ENCODE measurements at regions of chr2 and their contacts with region 1.

Region 1: GRCh38 chr2:161954103-161954502 is 119.9 kb downstream of the DPP4 start:
- DNase-seq: no peak
- H3K4me3 Mint-ChIP-seq: peak overlapping the region; percentile 19
- H3K27ac Mint-ChIP-seq: peak overlapping the region; percentile 93
- H3K4me1 Mint-ChIP-seq: peaks cover 80% of the 10 kb centered on the region
- H3K27me3 Mint-ChIP-seq: no peaks in the 10 kb centered on the region

Region 2: GRCh38 chr2:161166538-161167409 is 787.3 kb before region 1 on chr2:
- intact Hi-C with region 1: loop called (anchors 1 kb)
- DNase-seq: peak; percentile 74
- H3K4me3 Mint-ChIP-seq: peak overlapping the region; percentile 75
- H3K27ac Mint-ChIP-seq: peak overlapping the region; percentile 94
- H3K4me1 Mint-ChIP-seq: peaks cover 100% of the 10 kb centered on the region
- H3K27me3 Mint-ChIP-seq: no peaks in the 10 kb centered on the region

Region 3: GRCh38 chr2:161965994-161966393 is 11.9 kb after region 1 on chr2:
- intact Hi-C with region 1: loop called (anchors 1 kb)
- DNase-seq: no peak
- H3K4me3 Mint-ChIP-seq: no peak overlapping the region
- H3K27ac Mint-ChIP-seq: peak overlapping the region; percentile 1
- H3K4me1 Mint-ChIP-seq: peaks cover 86% of the 10 kb centered on the region
- H3K27me3 Mint-ChIP-seq: no peaks in the 10 kb centered on the region

Region 4: GRCh38 chr2:161992526-161992925 is 38.4 kb after region 1 on chr2:
- intact Hi-C with region 1: loop called (anchors 1 kb)
- DNase-seq: peak; percentile 61
- H3K4me3 Mint-ChIP-seq: peak overlapping the region; percentile 83
- H3K27ac Mint-ChIP-seq: peak overlapping the region; percentile 96
- H3K4me1 Mint-ChIP-seq: peaks cover 78% of the 10 kb centered on the region
- H3K27me3 Mint-ChIP-seq: no peaks in the 10 kb centered on the region

Region 5: GRCh38 chr2:162058973-162059668 is 105.0 kb after region 1 on chr2:
- intact Hi-C with region 1: loop called (anchors 1 kb)
- DNase-seq: peak; percentile 25
- H3K4me3 Mint-ChIP-seq: peak overlapping the region; percentile 75
- H3K27ac Mint-ChIP-seq: peak overlapping the region; percentile 96
- H3K4me1 Mint-ChIP-seq: peaks cover 93% of the 10 kb centered on the region
- H3K27me3 Mint-ChIP-seq: no peaks in the 10 kb centered on the region

Region 6: DNA sequence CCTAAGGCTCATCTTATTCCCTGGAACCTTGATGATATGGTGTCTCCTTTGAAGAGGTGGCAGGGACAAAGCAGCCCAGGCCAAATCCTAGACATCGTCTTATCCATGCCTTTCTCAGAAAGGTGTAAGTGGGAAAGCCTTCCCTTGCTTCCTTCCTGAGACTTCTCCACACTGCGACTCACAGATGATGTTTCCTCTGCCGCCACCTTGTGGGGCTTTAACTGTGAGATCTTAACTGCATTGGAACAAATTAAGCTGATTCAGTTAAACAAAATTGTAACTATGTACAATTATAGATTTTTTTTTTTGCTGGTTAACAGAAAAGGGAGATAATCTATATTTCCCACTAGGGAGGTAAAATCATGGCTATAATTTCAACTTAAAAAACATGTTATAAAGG is 379.9 kb after region 1 on chr2:
- intact Hi-C with region 1: no loop called
- DNase-seq: no peak
- H3K4me3 Mint-ChIP-seq: no peak overlapping the region
- H3K27ac Mint-ChIP-seq: no peak overlapping the region
- H3K4me1 Mint-ChIP-seq: peaks cover under 1% of the 10 kb centered on the region
- H3K27me3 Mint-ChIP-seq: no peaks in the 10 kb centered on the region

Measured in activated T-helper 1 cell treated with anti-CD3 and anti-CD28 coated beads, Interleukin-12 subunit alpha, Interleukin-12 subunit beta, Interleukin-2, Interleukin-4 antibody, amounts not matched to agents 30 ng/mL and 10 ng/mL and 1 ng/mL, durations not matched to agents 14 hours and 24 hours and 36 hours (primary cell).